CD4-positive, alpha-beta memory T cell (primary cell): ENCODE measurements at regions of chr1 and their contacts with region 1.

Region 1: GRCh38 chr1:15526490-15527339 is at the start of gene DNAJC16:
- DNase-seq: peak; percentile 97 to 99 (median 98)
- H3K4me3 ChIP-seq: peak within 1 kb of the TSS; percentile 61 to 76
- H3K4me3 Mint-ChIP-seq: peak within 1 kb of the TSS; percentile 85 to 97 (median 94)
- H3K27ac ChIP-seq: peak within 1 kb of the TSS; percentile 71
- H3K27ac Mint-ChIP-seq: peak within 1 kb of the TSS; percentile 86 to 100 (median 100)
- H3K4me1 ChIP-seq: peaks cover 40% of the 10 kb centered on the region
- H3K4me1 Mint-ChIP-seq: peaks cover 32 to 66% (median 45%) of the 10 kb centered on the region in 4 donors
- H3K27me3 ChIP-seq: no peaks in the 10 kb centered on the region
- H3K27me3 Mint-ChIP-seq: no peaks in the 10 kb centered on the region
- total RNA-seq, gene DNAJC16: 29.6 to 31.0 TPM

Region 2: DNA sequence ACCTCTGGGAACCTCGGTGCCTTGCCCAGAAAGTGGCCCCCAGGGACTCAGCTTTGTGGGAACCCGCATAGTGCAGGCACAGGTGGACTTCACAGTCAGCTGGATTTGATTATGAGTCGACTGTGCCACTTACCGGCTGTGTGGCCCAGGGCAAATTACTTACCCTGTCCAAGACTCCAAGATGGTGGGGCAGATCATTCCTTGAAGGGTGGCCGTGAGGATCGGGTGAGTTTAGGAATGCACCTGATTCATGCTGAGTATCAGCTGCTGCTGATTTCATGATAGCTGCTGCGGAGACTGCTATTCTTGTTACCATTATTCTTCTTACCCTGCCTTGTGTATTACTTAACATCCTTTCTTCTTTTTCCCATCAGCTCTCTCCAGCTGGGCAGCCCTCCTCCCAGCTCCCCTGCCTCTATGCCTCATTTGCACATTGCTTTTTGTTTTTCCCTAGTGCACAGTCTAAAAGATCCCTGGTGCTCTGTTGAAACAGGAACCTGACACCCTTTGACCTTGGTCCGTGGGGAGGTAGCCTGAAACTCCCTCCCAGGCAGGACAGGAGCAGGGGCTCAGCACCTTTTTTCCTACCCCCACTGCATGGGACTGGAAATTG is 320.2 kb before region 1 on chr1:
- CTCF ChIA-PET with region 1: no interaction called
- POLR2A ChIA-PET with region 1: no interaction called
- intact Hi-C with region 1: no loop called
- DNase-seq: no peak
- H3K4me3 ChIP-seq: no peak overlapping the region
- H3K4me3 Mint-ChIP-seq: no peak overlapping the region
- H3K27ac ChIP-seq: no peak overlapping the region
- H3K27ac Mint-ChIP-seq: peak overlapping the region in 1 of 7 donors; percentile 55
- H3K4me1 ChIP-seq: no peaks in the 10 kb centered on the region
- H3K4me1 Mint-ChIP-seq: no peaks in the 10 kb centered on the region
- H3K27me3 ChIP-seq: no peaks in the 10 kb centered on the region
- H3K27me3 Mint-ChIP-seq: peaks cover 9 to 11% of the 10 kb centered on the region in 2 donors

Region 3: DNA sequence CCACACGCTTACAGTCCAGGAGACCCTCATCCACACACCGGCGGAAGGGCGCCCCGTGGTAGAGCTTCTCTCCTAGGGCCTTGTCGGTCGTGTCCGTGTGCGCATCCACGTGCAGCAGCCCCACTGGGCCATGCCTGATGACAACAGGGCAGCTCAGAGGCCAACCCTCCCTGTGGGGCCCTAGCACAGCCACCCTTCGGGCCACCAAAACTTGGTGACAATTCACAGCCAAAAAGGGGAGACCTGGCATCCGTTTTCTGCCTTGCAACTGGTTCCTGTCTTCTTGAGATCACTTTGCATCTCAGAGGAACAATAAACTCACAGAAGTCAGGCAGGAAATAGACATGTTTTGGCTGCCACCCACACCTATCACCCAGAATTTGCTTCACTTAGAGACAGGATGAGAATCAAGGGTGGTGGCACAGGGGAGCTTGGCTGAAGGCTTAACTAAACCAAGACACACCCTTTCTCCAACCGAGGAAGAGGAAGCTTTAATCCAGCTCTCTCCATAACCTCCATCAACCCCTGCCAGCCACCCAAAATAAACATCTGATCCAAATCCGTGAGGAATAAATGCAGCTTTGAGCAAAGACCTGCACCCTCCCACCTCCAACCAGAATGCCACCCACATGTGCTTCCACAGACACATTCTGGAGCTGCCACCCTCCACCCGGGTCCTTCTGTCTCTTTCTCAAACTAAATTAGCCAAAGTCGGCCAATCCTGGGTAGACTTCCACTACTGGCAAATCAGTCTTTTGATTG is 52.4 kb after region 1 on chr1:
- CTCF ChIA-PET with region 1: interaction called, 3 read pairs
- POLR2A ChIA-PET with region 1: interaction called, 28 read pairs
- intact Hi-C with region 1: loop called (anchors 1 kb)
- DNase-seq: peak in 4 of 5 donors; percentile 52 to 65 (median 56)
- H3K4me3 ChIP-seq: peak overlapping the region in 1 of 2 donors; percentile 47
- H3K4me3 Mint-ChIP-seq: peak overlapping the region; percentile 21 to 82 (median 64)
- H3K27ac ChIP-seq: peak overlapping the region; percentile 44
- H3K27ac Mint-ChIP-seq: peak overlapping the region; percentile 91 to 96 (median 95)
- H3K4me1 ChIP-seq: peaks cover 50% of the 10 kb centered on the region
- H3K4me1 Mint-ChIP-seq: peaks cover 28 to 63% (median 49%) of the 10 kb centered on the region in 4 donors
- H3K27me3 ChIP-seq: no peaks in the 10 kb centered on the region
- H3K27me3 Mint-ChIP-seq: no peaks in the 10 kb centered on the region

Region 4: DNA sequence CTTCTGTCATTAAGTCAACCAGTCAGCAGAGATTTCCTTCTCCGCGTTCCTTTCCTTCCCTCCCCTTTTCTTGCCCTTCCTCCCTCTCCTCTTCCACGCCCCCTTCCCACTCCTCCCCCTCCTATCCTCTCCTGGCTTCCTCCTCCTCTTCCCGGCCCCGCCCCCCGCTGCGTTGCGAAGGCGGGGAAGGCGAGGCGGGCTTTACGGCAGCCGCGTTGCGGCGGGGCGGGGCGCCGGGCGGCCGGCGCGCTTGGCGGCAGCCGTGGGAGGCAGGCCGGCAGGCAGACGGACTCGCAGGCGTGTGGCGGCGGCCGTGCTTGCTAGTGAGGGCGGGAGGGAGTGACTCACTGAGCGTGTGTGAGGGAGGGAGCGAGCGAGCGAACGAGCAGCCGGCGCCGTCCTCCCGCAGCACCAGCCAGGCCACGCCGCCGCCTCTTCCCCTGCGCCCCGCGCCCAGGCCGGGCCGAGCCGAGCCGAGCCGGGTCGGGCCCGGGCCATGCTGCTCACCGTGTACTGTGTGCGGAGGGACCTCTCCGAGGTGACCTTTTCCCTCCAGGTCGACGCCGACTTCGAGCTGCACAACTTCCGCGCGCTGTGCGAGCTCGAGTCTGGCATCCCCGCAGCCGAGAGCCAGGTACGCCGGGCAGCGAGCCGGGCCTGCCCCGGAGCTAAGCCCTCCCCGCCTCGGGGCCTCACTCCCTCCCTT is 90.6 kb after region 1 on chr1 and contains the start of gene DDI2:
- CTCF ChIA-PET with region 1: no interaction called
- POLR2A ChIA-PET with region 1: interaction called, 27 read pairs
- intact Hi-C with region 1: loop called (anchors 1 kb)
- DNase-seq: peak; percentile 91 to 97 (median 93)
- H3K4me3 ChIP-seq: peak within 1 kb of the TSS; percentile 68 to 93
- H3K4me3 Mint-ChIP-seq: peak within 1 kb of the TSS; percentile 92 to 94 (median 93)
- H3K27ac ChIP-seq: peak within 1 kb of the TSS; percentile 86
- H3K27ac Mint-ChIP-seq: peak within 1 kb of the TSS; percentile 76 to 98 (median 96)
- H3K4me1 ChIP-seq: peaks cover 50% of the 10 kb centered on the region
- H3K4me1 Mint-ChIP-seq: peaks cover 27 to 55% (median 41%) of the 10 kb centered on the region in 4 donors
- H3K27me3 ChIP-seq: no peaks in the 10 kb centered on the region
- H3K27me3 Mint-ChIP-seq: no peaks in the 10 kb centered on the region
- total RNA-seq, gene DDI2: 46.2 to 47.6 TPM

Region 5: DNA sequence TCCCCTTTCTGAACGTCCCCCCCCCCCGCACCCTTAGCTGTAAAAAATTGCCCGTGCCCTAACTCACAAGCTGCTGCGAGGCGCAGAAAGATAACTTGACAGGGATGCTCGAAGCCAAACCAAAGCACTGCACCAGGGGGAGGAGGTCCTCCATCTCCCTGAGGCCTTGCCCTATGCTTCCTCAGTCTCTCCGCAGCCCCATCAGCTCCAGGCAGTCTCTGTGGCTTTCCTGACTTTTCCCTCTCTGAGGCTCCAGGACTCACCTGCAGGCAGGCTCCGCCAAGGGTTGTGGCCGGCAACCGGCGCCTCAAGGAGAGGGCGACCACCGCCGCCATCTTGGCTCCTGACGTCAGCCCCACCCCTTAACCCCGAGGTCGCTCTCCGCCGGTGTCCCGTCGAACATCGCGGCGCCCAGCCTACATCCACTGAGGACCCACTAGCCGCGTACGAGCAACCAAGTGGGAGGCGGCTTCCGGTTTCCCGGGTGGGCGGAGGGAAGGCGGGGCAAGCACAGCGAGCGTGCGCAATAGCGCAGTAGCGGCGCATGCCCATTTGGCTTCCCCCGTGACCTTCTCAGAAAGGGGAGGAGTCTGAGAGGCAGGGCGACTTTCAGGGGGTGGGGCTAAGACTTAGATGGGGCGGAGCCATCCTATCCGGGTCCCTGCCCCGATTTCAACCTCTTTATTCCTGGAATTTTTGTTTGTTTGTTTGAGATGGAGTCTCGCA is 1527.1 kb after region 1 on chr1 and contains the start of gene SDHB:
- CTCF ChIA-PET with region 1: no interaction called
- POLR2A ChIA-PET with region 1: no interaction called
- intact Hi-C with region 1: loop called (anchors 10 kb)
- DNase-seq: peak; percentile 98 to 100 (median 99)
- H3K4me3 ChIP-seq: peak within 1 kb of the TSS; percentile 72 to 89
- H3K4me3 Mint-ChIP-seq: peak within 1 kb of the TSS; percentile 97 to 100 (median 99)
- H3K27ac ChIP-seq: peak within 1 kb of the TSS; percentile 83
- H3K27ac Mint-ChIP-seq: peak within 1 kb of the TSS; percentile 95 to 99 (median 99)
- H3K4me1 ChIP-seq: peaks cover 18% of the 10 kb centered on the region
- H3K4me1 Mint-ChIP-seq: peaks cover 17 to 38% (median 27%) of the 10 kb centered on the region in 4 donors
- H3K27me3 ChIP-seq: no peaks in the 10 kb centered on the region
- H3K27me3 Mint-ChIP-seq: peaks cover 0 to 2% of the 10 kb centered on the region in 2 donors
- total RNA-seq, gene SDHB: 57.0 to 66.4 TPM